HAP-1 (cell line): ENCODE measurements at regions of chr20 and their contacts with region 1.

Region 1: GRCh38 chr20:62064788-62065668 is 653 bp downstream of the TAF4 start:
- DNase-seq: peak in 1 of 2 experiments; percentile 48
- H3K4me3 ChIP-seq: peak overlapping the region; percentile 37
- H3K4me1 ChIP-seq: peaks cover 9% of the 10 kb centered on the region
- H3K27me3 ChIP-seq: no peaks in the 10 kb centered on the region

Region 2: DNA sequence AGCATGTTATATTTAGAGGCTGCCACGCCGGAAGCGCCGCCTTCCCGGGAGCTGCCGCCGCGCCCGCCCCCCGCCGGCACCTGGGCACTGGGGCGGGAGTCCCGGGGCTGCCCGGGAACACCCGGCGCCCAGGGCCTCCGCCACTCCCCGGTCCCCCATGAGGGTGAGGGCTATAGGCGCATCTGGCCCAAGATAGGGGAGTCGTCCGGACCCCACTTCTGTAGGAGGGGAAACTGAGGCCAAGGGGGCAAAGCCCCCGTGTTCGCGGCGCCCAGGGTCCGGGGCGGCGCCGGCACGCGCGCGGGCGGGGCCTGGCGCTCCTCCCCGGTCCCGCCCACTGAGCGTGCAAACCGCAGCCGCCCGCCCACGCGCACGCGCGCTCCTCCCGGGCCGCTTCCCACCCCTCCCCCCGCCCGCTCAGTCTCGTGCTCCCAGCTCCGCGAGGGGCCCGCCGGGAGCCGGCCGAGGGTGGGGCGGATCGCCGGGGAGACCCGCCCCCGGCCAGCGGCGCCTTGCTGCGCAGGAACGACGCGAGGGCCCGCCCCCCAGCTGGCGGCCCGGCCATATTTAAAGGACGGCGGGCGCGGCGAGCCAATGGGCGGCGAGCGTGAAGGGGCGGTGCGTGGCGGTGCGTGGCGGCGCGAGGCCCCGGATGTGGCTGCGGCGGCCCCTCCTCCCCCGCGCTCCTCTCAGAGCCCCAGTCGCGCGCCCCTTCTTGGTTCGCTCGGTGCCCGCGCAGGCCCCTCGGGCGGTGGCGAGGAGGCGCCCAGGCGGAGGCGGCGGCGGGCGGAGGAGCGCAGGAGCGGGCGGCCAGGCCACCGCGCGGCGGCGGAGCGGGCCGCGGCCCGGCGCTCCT is 57.0 kb after region 1 on chr20 and contains the start of gene LSM14B:
- in situ Hi-C with region 1: loop called (anchors 5 kb)
- DNase-seq: peak; percentile 91 to 96
- H3K4me3 ChIP-seq: peak within 1 kb of the TSS; percentile 47
- H3K4me1 ChIP-seq: peaks cover 8% of the 10 kb centered on the region; the same call in 1 of the 2 replicates
- H3K27me3 ChIP-seq: no peaks in the 10 kb centered on the region